Naive thymus-derived CD4-positive, alpha-beta T cell (primary cell): ENCODE measurements at regions of chr9 and their contacts with region 1.

Region 1: GRCh38 chr9:77433675-77434445 is 214.3 kb downstream of the GNA14 start:
- DNase-seq: peak; percentile 24 to 62 (median 46)
- ATAC-seq: peak; percentile 90
- H3K4me3 ChIP-seq: no peak overlapping the region
- H3K4me3 Mint-ChIP-seq: peak overlapping the region in 3 of 10 donors; percentile 9 to 70 (median 29)
- H3K27ac ChIP-seq: no peak overlapping the region
- H3K27ac Mint-ChIP-seq: no peak overlapping the region
- H3K4me1 ChIP-seq: no peaks in the 10 kb centered on the region
- H3K4me1 Mint-ChIP-seq: peaks cover 4 to 6% (median 4%) of the 10 kb centered on the region in 7 donors
- H3K27me3 ChIP-seq: no peaks in the 10 kb centered on the region
- H3K27me3 Mint-ChIP-seq: peaks cover 0 to 8% (median 0%) of the 10 kb centered on the region in 5 donors

Region 2: GRCh38 chr9:77163884-77164283 is 270.0 kb before region 1 on chr9:
- CTCF ChIA-PET with region 1: no interaction called
- POLR2A ChIA-PET with region 1: no interaction called
- intact Hi-C with region 1: no loop called
- DNase-seq: no peak
- ATAC-seq: no peak
- H3K4me3 ChIP-seq: no peak overlapping the region
- H3K4me3 Mint-ChIP-seq: no peak overlapping the region
- H3K27ac ChIP-seq: no peak overlapping the region
- H3K27ac Mint-ChIP-seq: no peak overlapping the region
- H3K4me1 ChIP-seq: no peaks in the 10 kb centered on the region
- H3K4me1 Mint-ChIP-seq: no peaks in the 10 kb centered on the region
- H3K27me3 ChIP-seq: no peaks in the 10 kb centered on the region
- H3K27me3 Mint-ChIP-seq: peaks cover 0 to 30% (median 4%) of the 10 kb centered on the region in 5 donors

Region 3: GRCh38 chr9:77488439-77489126 is 54.7 kb after region 1 on chr9:
- CTCF ChIA-PET with region 1: no interaction called
- POLR2A ChIA-PET with region 1: no interaction called
- intact Hi-C with region 1: loop called (anchors 2 to 10 kb)
- DNase-seq: peak in 1 of 9 donors; percentile 9
- ATAC-seq: no peak
- H3K4me3 ChIP-seq: no peak overlapping the region
- H3K4me3 Mint-ChIP-seq: peak overlapping the region in 9 of 10 donors; percentile 48 to 84 (median 80)
- H3K27ac ChIP-seq: no peak overlapping the region
- H3K27ac Mint-ChIP-seq: peak overlapping the region in 4 of 9 donors; percentile 4 to 68 (median 14)
- H3K4me1 ChIP-seq: no peaks in the 10 kb centered on the region
- H3K4me1 Mint-ChIP-seq: peaks cover 6 to 24% (median 14%) of the 10 kb centered on the region in 7 donors
- H3K27me3 ChIP-seq: peaks cover 0 to 4% of the 10 kb centered on the region in 2 donors
- H3K27me3 Mint-ChIP-seq: peaks cover 3 to 23% (median 12%) of the 10 kb centered on the region in 5 donors

Region 4: GRCh38 chr9:77751341-77752091 is 317.7 kb after region 1 on chr9:
- CTCF ChIA-PET with region 1: no interaction called
- POLR2A ChIA-PET with region 1: no interaction called
- intact Hi-C with region 1: loop called (anchors 1 kb)
- DNase-seq: peak in 6 of 9 donors; percentile 4 to 28 (median 22)
- ATAC-seq: peak; percentile 57
- H3K4me3 ChIP-seq: no peak overlapping the region
- H3K4me3 Mint-ChIP-seq: no peak overlapping the region
- H3K27ac ChIP-seq: no peak overlapping the region
- H3K27ac Mint-ChIP-seq: peak overlapping the region in 5 of 9 donors; percentile 4 to 86 (median 29)
- H3K4me1 ChIP-seq: no peaks in the 10 kb centered on the region
- H3K4me1 Mint-ChIP-seq: peaks cover 15 to 34% (median 28%) of the 10 kb centered on the region in 7 donors
- H3K27me3 ChIP-seq: no peaks in the 10 kb centered on the region
- H3K27me3 Mint-ChIP-seq: no peaks in the 10 kb centered on the region

Region 5: GRCh38 chr9:77957281-77958051 is 523.6 kb after region 1 on chr9:
- CTCF ChIA-PET with region 1: no interaction called
- POLR2A ChIA-PET with region 1: no interaction called
- intact Hi-C with region 1: loop called in 1 of 2 experiments (anchors 10 kb)
- DNase-seq: no peak
- ATAC-seq: peak; percentile 36
- H3K4me3 ChIP-seq: no peak overlapping the region
- H3K4me3 Mint-ChIP-seq: peak overlapping the region in 2 of 10 donors; percentile 4 to 55
- H3K27ac ChIP-seq: no peak overlapping the region
- H3K27ac Mint-ChIP-seq: peak overlapping the region in 2 of 9 donors; percentile 15 to 18
- H3K4me1 ChIP-seq: peaks cover 0 to 11% of the 10 kb centered on the region in 2 donors
- H3K4me1 Mint-ChIP-seq: peaks cover 41 to 89% (median 73%) of the 10 kb centered on the region in 7 donors
- H3K27me3 ChIP-seq: no peaks in the 10 kb centered on the region
- H3K27me3 Mint-ChIP-seq: no peaks in the 10 kb centered on the region

Region 6: GRCh38 chr9:78261403-78262001 is 827.6 kb after region 1 on chr9:
- CTCF ChIA-PET with region 1: no interaction called
- POLR2A ChIA-PET with region 1: no interaction called
- intact Hi-C with region 1: loop called in 1 of 2 experiments (anchors 5 kb)
- DNase-seq: peak in 4 of 9 donors; percentile 21 to 35 (median 32)
- ATAC-seq: no peak
- H3K4me3 ChIP-seq: no peak overlapping the region
- H3K4me3 Mint-ChIP-seq: no peak overlapping the region
- H3K27ac ChIP-seq: no peak overlapping the region
- H3K27ac Mint-ChIP-seq: peak overlapping the region in 1 of 9 donors; percentile 43
- H3K4me1 ChIP-seq: no peaks in the 10 kb centered on the region
- H3K4me1 Mint-ChIP-seq: peaks cover 0 to 3% (median 0%) of the 10 kb centered on the region in 7 donors
- H3K27me3 ChIP-seq: no peaks in the 10 kb centered on the region
- H3K27me3 Mint-ChIP-seq: no peaks in the 10 kb centered on the region